ENCODE measurements at regions of chr9 and their contacts with region 1.

Region 1: DNA sequence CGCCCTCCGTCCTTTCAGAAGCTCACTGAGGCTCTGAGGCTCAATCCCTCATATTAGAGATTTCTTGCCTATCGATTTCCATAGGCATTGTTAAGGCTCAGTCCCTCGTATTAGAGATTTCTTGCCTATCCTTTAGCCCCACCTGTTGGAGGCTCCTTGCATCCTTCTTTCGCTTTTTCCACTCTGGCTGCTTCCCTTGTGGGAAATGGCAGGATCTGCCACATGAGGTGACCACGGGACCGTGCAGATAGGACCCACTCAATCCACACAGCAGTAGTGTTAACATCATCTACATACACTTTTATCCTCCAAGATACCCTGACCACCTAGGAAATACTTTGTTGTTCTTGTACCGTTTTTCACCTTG is 19.5 kb downstream of the IFT74 start:
- DNase-seq: no peak

Region 2: GRCh38 chr9:26744191-26744965 is 231.3 kb before region 1 on chr9:
- intact Hi-C with region 1: loop called (anchors 2 kb)
- DNase-seq: no peak

Region 3: GRCh38 chr9:26946753-26947727 is 28.6 kb before region 1 on chr9 and contains the start of gene PLAA:
- intact Hi-C with region 1: no loop called
- DNase-seq: peak; percentile 96
- total RNA-seq, gene PLAA: 31.5 TPM

Region 4: DNA sequence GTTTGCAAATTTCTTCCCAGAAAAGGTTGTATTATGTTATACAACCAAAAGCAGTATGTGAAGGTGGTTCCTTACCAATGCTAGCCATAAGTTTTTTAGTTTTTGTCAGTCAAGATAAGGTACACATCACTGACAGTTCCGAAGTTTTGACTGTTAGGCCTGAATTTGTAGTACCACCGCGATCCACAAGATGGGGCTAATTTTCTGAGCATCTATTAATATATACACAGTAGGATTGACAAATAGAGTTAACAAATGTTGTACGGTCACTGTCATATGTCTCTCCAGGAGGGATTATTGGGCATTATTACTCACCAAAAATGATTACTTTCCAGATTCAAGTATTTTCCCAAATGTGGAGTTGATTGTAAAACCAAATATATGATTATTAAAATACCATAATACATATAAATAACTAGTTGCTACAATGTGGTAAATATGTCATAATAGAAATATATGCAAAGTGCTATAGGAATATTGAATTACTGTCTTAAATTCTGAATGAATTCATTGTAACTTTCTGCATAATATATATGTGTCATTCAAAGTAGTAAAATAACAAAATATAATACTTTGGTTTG is 58.2 kb after region 1 on chr9:
- intact Hi-C with region 1: no loop called
- DNase-seq: no peak